ENCODE measurements at regions of chr14 and their contacts with region 1.

Region 1: DNA sequence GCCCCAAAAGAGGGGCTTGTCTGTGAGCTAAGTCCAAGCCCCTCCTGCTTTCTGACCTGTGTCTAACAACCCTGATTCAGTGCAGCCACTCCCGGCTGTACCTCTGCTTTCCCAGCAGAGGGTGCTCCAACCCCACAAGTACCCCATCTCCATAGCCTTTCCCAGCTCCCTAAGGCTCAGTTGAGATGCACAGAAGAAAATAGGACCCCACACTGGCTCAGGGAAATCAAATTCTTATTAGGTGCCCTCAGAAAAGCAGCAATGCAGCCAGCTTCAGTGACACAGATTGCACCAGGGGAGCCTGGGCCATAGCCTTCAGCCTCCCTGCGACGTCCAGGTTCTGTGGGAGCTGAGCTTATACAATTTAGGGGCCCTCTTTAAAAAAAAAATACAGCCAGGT is 49.9 kb downstream of the LRRC74A start:
- DNase-seq: no peak
- H3K4me3 ChIP-seq: no peak overlapping the region
- H3K27ac ChIP-seq: no peak overlapping the region
- H3K4me1 ChIP-seq: no peaks in the 10 kb centered on the region
- H3K27me3 ChIP-seq: peaks cover 0 to 5% (median 0%) of the 10 kb centered on the region in 4 donors
- CTCF ChIP-seq: peak; percentile 79 to 96 (median 92)
- POLR2A ChIP-seq: no peak

Region 2: DNA sequence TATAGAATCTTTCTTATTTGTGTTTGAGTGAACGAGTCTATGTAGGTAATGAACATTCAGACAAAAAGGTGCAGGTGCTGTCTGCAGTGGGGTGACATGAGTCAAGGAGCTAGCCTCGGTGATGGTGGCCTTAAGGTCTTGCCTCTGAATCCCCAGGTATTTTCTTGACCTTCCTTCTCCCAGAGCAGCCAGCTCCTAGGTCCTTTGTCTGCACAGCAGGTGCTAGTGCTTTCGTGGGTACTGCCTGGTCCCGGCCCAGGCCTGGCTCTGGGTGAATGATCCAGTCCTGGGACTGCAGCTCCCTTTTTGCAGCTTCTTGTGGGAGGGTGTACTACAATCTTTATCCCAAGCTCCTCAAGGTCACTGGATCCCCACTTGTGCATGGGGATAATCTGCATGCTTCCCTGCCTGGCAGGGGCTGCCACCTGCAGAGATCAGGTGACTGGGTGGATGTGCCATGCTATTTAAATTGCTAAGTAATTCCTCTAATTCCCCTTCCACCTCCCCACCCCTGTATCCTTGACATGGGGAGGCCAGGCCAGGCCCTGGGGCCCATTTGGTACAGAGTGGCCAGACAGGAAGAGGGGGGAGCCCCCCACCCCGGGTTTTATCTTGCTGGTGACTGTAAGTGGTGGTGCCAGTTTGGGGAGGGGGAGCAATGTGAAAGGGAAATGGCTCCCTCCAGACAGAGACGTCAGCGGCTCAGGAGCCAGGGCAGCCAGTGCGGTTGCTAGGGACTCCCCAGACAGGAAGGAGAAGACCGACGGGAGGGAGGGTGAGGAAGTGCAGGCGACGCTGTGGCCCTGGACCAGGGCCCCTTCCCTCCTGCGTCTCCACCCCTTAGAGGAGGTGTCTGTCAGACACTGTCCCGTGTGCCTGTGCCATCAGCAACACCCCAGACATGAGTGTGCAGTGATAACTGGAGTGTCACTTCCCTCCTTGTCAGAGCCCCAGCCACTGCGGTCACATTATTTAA is 108.1 kb before region 1 on chr14:
- intact Hi-C with region 1: no loop called
- DNase-seq: no peak
- H3K4me3 ChIP-seq: peak overlapping the region in 1 of 4 donors; percentile 7
- H3K27ac ChIP-seq: peak overlapping the region; percentile 30 to 75 (median 56)
- H3K4me1 ChIP-seq: peaks cover 13 to 65% (median 32%) of the 10 kb centered on the region in 3 donors
- H3K27me3 ChIP-seq: peaks cover 0 to 2% (median 0%) of the 10 kb centered on the region in 4 donors
- CTCF ChIP-seq: peak in 1 of 6 experiments; percentile 10
- POLR2A ChIP-seq: no peak

Region 3: GRCh38 chr14:77067632-77068514 is 191.8 kb after region 1 on chr14:
- intact Hi-C with region 1: loop called (anchors 2 kb)
- DNase-seq: no peak
- H3K4me3 ChIP-seq: no peak overlapping the region
- H3K27ac ChIP-seq: peak overlapping the region in 1 of 4 donors; percentile 29
- H3K4me1 ChIP-seq: peaks cover 6 to 57% (median 12%) of the 10 kb centered on the region in 3 donors
- H3K27me3 ChIP-seq: no peaks in the 10 kb centered on the region
- CTCF ChIP-seq: peak; percentile 49 to 91 (median 86)
- POLR2A ChIP-seq: no peak

Region 4: DNA sequence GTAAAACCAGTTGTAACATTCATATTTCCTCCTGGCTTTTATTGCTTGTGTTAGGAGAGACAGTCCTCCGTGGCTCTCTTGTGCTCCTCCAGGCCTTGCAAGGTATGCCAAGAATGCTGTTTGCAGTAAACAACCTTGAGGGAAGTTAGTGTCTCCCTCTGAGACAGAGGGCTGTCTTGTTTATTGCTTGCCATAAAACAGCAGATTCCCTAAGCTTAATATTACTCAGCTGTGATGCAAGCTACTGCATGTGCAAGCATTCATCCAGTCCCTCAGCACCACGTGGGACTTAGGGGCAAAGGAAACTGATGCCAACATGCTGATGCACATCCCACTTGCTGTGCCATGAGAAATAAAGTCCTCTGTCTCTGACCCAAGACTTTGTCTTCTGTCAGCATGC is 438.0 kb after region 1 on chr14:
- intact Hi-C with region 1: loop called (anchors 10 kb)
- DNase-seq: no peak
- H3K4me3 ChIP-seq: no peak overlapping the region
- H3K27ac ChIP-seq: peak overlapping the region; percentile 27 to 45 (median 40)
- H3K4me1 ChIP-seq: peaks cover 7 to 38% (median 9%) of the 10 kb centered on the region in 3 donors
- H3K27me3 ChIP-seq: no peaks in the 10 kb centered on the region
- CTCF ChIP-seq: no peak
- POLR2A ChIP-seq: no peak